Activated CD4-positive, alpha-beta T cell treated with anti-CD3 and anti-CD28 coated beads, Interleukin-2, amount 10 ng/mL, durations not matched to agents 24 days and 14 days (primary cell): ENCODE measurements at regions of chr1 and their contacts with region 1.

Region 1: DNA sequence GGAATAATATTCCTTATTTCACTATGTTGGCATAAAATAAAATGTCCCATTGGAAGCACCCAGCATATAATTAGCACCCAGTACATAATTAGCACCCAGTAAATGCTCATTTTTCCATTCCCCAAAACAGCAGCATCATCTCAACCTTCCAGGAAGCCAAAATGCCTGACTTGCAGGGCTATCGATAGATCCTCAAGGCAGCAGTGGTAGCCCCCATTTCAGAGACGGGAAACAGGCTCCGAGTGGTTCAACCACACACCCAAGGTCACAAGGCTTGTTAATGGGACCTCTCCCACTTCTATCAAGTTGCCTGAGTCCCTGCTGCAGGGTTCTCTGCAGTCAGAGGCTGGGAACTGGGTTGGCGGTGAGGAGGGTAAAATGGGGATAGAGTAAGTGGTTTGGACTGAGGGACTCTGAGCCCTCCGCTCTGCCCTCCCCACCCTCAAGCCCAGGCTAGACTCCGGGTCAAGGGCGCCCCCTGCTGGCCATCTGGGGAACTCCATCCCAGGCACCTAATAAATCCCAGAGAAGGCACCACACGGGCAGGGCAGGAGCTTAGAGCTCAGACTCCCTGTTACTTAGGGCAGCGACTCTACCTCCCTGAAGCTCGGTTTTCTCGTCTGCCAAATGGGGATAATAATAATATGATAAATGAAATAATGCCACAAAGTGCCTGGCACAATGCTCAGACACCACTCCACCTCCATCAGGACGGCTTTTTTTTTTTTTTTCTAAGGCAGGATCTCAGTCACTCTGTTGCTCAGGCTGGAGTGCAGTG is 21.9 kb upstream of the LAPTM5 start:
- DNase-seq: peak; percentile 97
- H3K4me3 Mint-ChIP-seq: no peak overlapping the region
- H3K27ac Mint-ChIP-seq: no peak overlapping the region
- H3K4me1 Mint-ChIP-seq: peaks cover 11% of the 10 kb centered on the region
- H3K27me3 Mint-ChIP-seq: peaks cover 4% of the 10 kb centered on the region

Region 2: GRCh38 chr1:30743584-30744059 is 35.9 kb before region 1 on chr1:
- intact Hi-C with region 1: loop called (anchors 2 kb)
- DNase-seq: peak; percentile 92
- H3K4me3 Mint-ChIP-seq: peak overlapping the region; percentile 89
- H3K27ac Mint-ChIP-seq: peak overlapping the region; percentile 99
- H3K4me1 Mint-ChIP-seq: peaks cover 91% of the 10 kb centered on the region
- H3K27me3 Mint-ChIP-seq: no peaks in the 10 kb centered on the region

Region 3: GRCh38 chr1:30756545-30757195 is 22.8 kb before region 1 on chr1:
- intact Hi-C with region 1: loop called (anchors 1 kb)
- DNase-seq: peak; percentile 90
- H3K4me3 Mint-ChIP-seq: peak overlapping the region; percentile 100
- H3K27ac Mint-ChIP-seq: peak overlapping the region; percentile 97
- H3K4me1 Mint-ChIP-seq: peaks cover 82% of the 10 kb centered on the region
- H3K27me3 Mint-ChIP-seq: no peaks in the 10 kb centered on the region

Region 4: GRCh38 chr1:30911046-30911954 is 131.8 kb after region 1 on chr1:
- intact Hi-C with region 1: loop called (anchors 1 kb)
- DNase-seq: peak; percentile 86
- H3K4me3 Mint-ChIP-seq: no peak overlapping the region
- H3K27ac Mint-ChIP-seq: no peak overlapping the region
- H3K4me1 Mint-ChIP-seq: peaks cover 11% of the 10 kb centered on the region
- H3K27me3 Mint-ChIP-seq: peaks cover 34% of the 10 kb centered on the region

Region 5: GRCh38 chr1:30929135-30929889 is 149.8 kb after region 1 on chr1:
- intact Hi-C with region 1: loop called (anchors 5 kb)
- DNase-seq: peak; percentile 87
- H3K4me3 Mint-ChIP-seq: no peak overlapping the region
- H3K27ac Mint-ChIP-seq: no peak overlapping the region
- H3K4me1 Mint-ChIP-seq: no peaks in the 10 kb centered on the region
- H3K27me3 Mint-ChIP-seq: peaks cover 2% of the 10 kb centered on the region